Heart left ventricle (tissue), 16 donors: ENCODE measurements at regions of chr12 and their contacts with region 1.

Region 1: GRCh38 chr12:29519585-29520182 is 22.2 kb upstream of the OVCH1 start:
- DNase-seq: peak in 1 of 5 donors; percentile 13
- ATAC-seq: no peak
- H3K4me3 ChIP-seq: no peak overlapping the region
- H3K27ac ChIP-seq: no peak overlapping the region
- H3K4me1 ChIP-seq: no peaks in the 10 kb centered on the region
- H3K27me3 ChIP-seq: no peaks in the 10 kb centered on the region
- CTCF ChIP-seq: peak; percentile 48 to 77 (median 66)
- POLR2A ChIP-seq: no peak

Region 2: GRCh38 chr12:29416748-29417147 is 102.9 kb before region 1 on chr12:
- intact Hi-C with region 1: no loop called
- DNase-seq: no peak
- ATAC-seq: no peak
- H3K4me3 ChIP-seq: no peak overlapping the region
- H3K27ac ChIP-seq: no peak overlapping the region
- H3K4me1 ChIP-seq: no peaks in the 10 kb centered on the region
- H3K27me3 ChIP-seq: peaks cover 0 to 4% (median 0%) of the 10 kb centered on the region in 9 donors
- CTCF ChIP-seq: no peak
- POLR2A ChIP-seq: no peak

Region 3: DNA sequence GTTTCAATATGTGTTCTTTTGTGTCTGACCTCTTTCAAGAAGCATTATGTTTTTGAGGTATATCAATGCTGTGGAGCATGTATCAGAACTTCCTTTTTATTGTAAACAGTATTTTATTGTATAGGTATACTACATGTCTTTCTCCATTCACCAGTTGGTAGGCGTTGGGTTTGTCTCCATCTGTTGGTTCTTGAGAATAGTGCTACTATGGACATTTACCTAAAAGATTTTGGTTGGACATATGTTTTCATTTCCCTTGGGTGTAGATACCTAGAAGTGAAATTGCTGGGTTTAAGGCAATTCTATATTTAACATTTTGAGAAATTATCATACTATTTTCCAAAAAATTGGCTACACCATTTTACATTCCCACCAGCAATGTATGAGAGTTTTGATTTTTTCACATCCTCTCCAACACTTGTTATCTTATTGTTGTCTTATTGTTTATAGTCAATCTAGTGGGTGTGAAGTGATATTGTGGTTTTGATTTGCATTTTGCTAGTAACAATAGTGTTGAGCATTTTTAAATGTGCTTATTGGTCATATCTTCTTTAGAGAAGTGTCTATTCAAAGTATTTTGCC is 766.8 kb after region 1 on chr12:
- intact Hi-C with region 1: loop called in 4 of 10 experiments (anchors 5 to 10 kb)
- DNase-seq: no peak
- ATAC-seq: no peak
- H3K4me3 ChIP-seq: no peak overlapping the region
- H3K27ac ChIP-seq: no peak overlapping the region
- H3K4me1 ChIP-seq: no peaks in the 10 kb centered on the region
- H3K27me3 ChIP-seq: no peaks in the 10 kb centered on the region
- CTCF ChIP-seq: peak in 11 of 12 donors; percentile 17 to 56 (median 34)
- POLR2A ChIP-seq: no peak